ENCODE measurements at regions of chr14 and their contacts with region 1.

Region 1: GRCh38 chr14:77760381-77761246 is at the start of gene SNW1:
- DNase-seq: peak; percentile 97
- H3K4me3 Mint-ChIP-seq: peak within 1 kb of the TSS; percentile 94
- H3K27ac Mint-ChIP-seq: peak within 1 kb of the TSS; percentile 99
- H3K4me1 Mint-ChIP-seq: peaks cover 25% of the 10 kb centered on the region
- H3K27me3 Mint-ChIP-seq: peaks cover 6% of the 10 kb centered on the region
- total RNA-seq, gene SNW1: 121 TPM in 2 replicates

Region 2: GRCh38 chr14:77086017-77086736 is 674.4 kb before region 1 on chr14:
- intact Hi-C with region 1: no loop called
- DNase-seq: peak; percentile 65
- H3K4me3 Mint-ChIP-seq: no peak overlapping the region
- H3K27ac Mint-ChIP-seq: peak overlapping the region; percentile 48
- H3K4me1 Mint-ChIP-seq: peaks cover 5% of the 10 kb centered on the region
- H3K27me3 Mint-ChIP-seq: peaks cover 9% of the 10 kb centered on the region

Region 3: DNA sequence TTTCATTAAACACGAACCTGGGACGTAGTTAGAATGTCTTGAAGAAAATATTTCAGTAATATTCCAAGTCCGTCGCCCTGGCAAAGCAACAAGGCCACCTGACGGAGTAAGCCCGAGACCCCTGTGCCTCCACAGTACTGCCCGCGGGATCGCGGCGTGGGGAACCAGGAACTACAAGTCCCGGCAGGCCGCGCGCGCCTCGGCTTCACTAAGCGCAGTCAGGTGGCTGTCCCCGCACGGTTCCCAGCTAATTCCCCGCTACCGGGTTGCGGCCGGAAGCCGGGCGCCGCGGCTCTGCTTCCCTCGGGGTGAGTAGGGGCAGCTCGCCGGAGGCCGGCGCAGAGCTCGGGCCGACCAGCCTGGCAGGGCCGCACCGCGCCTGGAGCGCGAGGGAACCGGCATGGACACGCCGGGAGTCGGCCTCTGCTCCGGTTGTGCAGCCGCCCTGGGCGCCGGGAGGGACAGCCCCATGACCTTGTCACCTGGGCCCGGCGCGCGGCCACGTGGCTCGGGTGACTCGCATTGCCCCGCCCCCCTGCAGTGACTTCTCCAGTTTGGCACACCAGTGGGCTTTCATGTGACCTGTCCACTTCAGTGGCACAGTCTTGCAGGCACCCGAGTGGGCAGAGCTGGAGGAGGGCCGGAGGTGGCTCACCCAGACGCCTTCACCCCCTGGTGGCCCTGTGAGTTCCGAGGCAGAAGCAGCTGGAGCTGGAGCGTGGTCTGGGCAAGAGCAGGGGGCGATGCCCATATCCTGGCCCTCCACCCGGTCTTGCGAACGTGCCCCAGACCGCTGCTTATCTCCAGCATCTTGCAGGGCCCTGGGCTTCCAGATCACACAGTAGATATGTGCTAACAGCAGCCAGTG is 39.5 kb after region 1 on chr14 and contains the start of gene ADCK1:
- intact Hi-C with region 1: loop called (anchors 1 kb)
- DNase-seq: peak; percentile 96
- H3K4me3 Mint-ChIP-seq: peak within 1 kb of the TSS; percentile 88
- H3K27ac Mint-ChIP-seq: peak within 1 kb of the TSS; percentile 88
- H3K4me1 Mint-ChIP-seq: peaks cover 7% of the 10 kb centered on the region
- H3K27me3 Mint-ChIP-seq: no peaks in the 10 kb centered on the region
- total RNA-seq, gene ADCK1: 4.9 and 5.3 TPM in 2 replicates

Region 4: DNA sequence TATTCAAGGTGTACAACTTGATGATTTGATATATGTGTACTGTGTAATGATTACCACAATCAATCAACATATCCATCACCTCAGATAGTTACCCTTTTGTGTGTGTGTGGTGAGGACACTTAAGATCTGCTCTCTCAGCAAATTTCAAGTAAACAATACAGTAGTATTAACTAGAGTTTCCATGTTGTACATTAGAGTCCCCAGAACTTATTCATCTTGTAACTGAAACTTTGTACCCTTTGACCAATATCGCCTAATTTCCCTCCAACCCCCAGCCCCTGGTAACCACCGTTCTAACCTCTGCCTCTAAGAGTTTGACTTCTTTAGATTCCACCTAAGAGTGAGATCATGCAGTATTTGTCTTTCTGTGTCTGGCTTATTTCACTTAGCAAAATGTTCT is 51.4 kb after region 1 on chr14:
- intact Hi-C with region 1: no loop called
- DNase-seq: no peak
- H3K4me3 Mint-ChIP-seq: no peak overlapping the region
- H3K27ac Mint-ChIP-seq: no peak overlapping the region
- H3K4me1 Mint-ChIP-seq: no peaks in the 10 kb centered on the region
- H3K27me3 Mint-ChIP-seq: no peaks in the 10 kb centered on the region

Region 5: DNA sequence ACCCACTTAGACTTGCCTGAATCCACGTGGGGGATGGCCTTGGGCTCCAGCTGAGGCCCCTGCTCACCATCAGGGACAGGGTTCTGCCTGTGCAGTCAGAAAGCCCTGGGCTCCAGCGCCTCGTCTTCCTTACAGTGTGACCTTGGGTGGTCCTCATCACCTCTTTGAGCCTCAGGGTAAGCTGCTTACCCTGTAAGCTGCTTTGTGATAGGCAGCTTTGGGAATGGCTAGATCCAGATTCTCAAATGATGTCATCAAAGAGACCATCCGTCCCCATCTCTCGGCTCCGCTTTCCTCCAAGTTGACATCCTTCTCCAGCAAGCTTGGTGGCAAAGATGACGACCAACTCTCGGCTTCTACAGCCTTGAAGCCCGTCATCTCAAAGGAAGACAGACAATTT is 166.3 kb after region 1 on chr14:
- intact Hi-C with region 1: no loop called
- DNase-seq: no peak
- H3K4me3 Mint-ChIP-seq: no peak overlapping the region
- H3K27ac Mint-ChIP-seq: no peak overlapping the region
- H3K4me1 Mint-ChIP-seq: no peaks in the 10 kb centered on the region
- H3K27me3 Mint-ChIP-seq: no peaks in the 10 kb centered on the region